Cardiac septum (tissue), 1 donor: ENCODE measurements at regions of chr3 and their contacts with region 1.

Region 1: DNA sequence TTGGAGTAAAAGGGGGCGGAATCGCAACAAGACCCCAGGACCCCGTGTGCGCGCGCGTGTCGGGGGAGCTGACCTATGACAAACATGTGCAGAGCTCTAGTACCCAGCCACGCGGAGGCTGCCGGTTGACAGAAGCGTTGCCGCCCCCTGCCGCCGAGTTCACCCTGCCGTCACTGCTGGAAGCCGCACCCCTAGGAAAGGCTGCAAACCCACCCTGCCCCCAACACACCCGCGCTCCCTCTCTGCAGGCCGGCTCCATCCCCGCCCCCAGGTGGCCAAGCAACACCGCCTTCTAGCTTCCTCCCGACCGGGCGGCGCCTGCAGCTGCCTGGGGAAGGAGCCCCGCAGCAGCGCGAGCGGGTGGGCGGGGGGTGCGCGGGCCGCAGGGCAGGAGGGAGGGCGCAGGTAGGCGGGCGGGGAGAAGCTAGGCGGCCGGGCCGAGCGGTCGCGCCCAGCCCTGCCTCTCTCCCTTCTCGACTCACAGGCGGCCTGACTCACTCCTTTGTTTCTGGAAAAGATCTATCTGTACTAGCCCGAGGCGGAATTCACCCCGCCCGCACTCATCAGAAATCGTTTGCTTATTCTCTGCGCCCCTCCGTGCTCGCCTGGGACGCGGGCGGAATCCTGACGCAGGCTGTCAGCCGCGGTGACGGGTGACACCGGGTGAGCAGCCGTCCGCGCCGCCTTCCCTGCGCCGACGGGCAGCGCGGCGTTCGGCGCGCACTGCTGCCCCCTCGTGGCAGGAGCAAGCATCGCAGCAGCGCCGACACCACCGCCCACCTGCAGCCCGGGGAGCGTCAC is 160.8 kb downstream of the GAP43 start:
- DNase-seq: peak; percentile 95

Region 2: DNA sequence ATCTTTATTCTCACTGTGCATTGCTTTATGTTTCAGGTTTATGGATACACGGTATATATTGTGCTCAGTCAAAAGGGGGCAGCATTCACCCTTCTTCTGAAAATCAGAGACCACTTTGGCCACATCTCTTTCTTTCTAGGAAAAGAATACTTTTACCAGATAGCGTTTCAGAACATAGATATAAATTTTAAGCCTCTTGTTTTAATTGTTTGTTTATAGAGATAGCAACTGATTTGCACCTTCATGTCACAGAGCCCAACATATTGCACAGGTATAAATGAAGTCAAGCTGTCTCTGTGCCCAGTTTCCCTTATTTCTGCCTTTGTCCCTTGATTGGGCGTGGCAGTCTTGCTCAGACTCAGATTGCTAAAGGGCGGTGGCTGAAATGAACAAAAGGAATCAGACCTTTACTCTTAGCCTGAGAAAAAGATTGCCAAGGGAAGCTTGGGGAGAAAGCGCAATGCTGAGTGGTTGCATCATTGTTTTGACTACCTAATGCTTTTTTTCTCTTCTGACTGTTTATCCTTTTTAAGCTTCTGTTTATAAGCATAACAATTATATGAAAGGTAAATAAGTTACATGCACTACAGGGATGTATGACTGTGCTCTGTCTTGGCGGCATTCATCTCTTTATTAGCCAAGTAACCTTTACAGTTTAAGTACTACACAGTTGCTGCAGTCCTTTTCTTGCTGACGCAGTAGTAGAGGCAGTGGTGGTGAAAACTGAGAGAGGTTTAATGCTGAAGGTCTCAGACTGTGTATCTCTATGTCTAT is 566.3 kb before region 1 on chr3:
- intact Hi-C with region 1: loop called (anchors 5 kb)
- DNase-seq: no peak

Region 3: GRCh38 chr3:115571413-115571812 is 212.7 kb before region 1 on chr3:
- intact Hi-C with region 1: loop called (anchors 10 kb)
- DNase-seq: no peak

Region 4: DNA sequence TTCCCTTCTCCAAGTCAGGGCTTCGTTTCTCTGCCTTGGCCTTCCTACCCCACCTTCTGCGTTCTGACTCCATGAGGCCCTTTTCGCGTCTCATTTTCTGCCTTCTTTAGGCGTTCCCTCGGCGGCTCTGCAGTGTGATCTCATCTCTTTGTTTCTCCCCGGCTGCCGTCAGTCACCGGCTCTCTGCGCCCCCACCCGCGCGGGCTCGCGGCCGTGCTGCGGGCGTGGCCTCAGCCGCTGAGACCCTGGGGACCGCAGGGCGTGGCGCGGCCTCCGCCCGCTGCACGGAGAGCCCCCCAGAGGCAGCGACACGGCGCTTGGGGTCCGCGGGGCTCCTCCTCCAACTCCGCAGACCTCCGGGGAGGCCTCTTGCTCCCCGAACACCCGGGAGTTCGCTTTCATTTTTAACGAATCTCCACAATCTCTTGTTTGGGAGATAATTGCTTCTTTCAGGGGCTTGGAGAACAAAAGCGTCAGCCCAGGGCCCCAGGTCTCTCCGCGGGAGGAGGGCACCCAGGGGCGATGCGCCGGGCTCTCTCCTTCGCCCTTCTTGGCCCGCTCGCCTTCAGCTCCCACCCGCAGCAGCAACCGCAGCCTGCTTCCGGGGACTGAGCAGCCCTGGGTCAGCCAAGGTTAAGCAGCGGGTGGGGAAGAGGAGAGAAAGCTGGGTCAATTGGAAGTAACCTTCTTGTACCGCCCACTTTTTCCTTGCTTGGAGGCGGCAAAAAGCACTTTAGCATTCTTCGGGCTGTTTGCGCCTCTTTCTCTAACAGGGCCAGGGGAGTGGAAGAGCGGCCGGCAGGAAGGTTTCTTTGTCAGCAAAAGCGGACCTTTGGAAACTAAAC is 125.6 kb before region 1 on chr3:
- intact Hi-C with region 1: loop called (anchors 5 kb)
- DNase-seq: peak; percentile 88